ENCODE measurements at regions of chr12 and their contacts with region 1.

Region 1: GRCh38 chr12:66196806-66197205 is 7.8 kb downstream of the IRAK3 start:
- DNase-seq: peak; percentile 54
- ATAC-seq: peak; percentile 88
- H3K4me3 ChIP-seq: no peak overlapping the region
- H3K27ac ChIP-seq: no peak overlapping the region; the same call in 1 of the 2 replicates
- H3K4me1 ChIP-seq: peaks cover 21% of the 10 kb centered on the region
- H3K27me3 ChIP-seq: no peaks in the 10 kb centered on the region
- CTCF ChIP-seq: no peak
- EP300 ChIP-seq: peak; percentile 39 to 79; a peak in 3 of 4 replicates
- POLR2A ChIP-seq: no peak
- RAD21 ChIP-seq: no peak

Region 2: GRCh38 chr12:66210840-66211239 is 14.0 kb after region 1 on chr12:
- CTCF ChIA-PET with region 1: interaction called, 4 read pairs
- POLR2A ChIA-PET with region 1: interaction called, 4 read pairs
- RAD21 ChIA-PET with region 1: interaction called, 4 read pairs
- SMC1A ChIA-PET with region 1: interaction called, 20 read pairs
- in situ Hi-C with region 1: no loop called
- intact Hi-C with region 1: no loop called
- DNase-seq: no peak
- ATAC-seq: no peak
- H3K4me3 ChIP-seq: no peak overlapping the region
- H3K27ac ChIP-seq: no peak overlapping the region
- H3K4me1 ChIP-seq: no peaks in the 10 kb centered on the region
- H3K27me3 ChIP-seq: no peaks in the 10 kb centered on the region
- CTCF ChIP-seq: no peak
- EP300 ChIP-seq: no peak
- POLR2A ChIP-seq: no peak
- RAD21 ChIP-seq: no peak